CD4-positive, alpha-beta memory T cell (primary cell): ENCODE measurements at regions of chr16 and their contacts with region 1.

Region 1: GRCh38 chr16:2905431-2906387 is 6.0 kb upstream of the FLYWCH1 start:
- DNase-seq: peak; percentile 85 to 91 (median 88)
- H3K4me3 ChIP-seq: peak overlapping the region; percentile 72 to 84
- H3K4me3 Mint-ChIP-seq: peak overlapping the region; percentile 88 to 96 (median 92)
- H3K27ac ChIP-seq: peak overlapping the region; percentile 63
- H3K27ac Mint-ChIP-seq: peak overlapping the region; percentile 77 to 96 (median 92)
- H3K4me1 ChIP-seq: peaks cover 12% of the 10 kb centered on the region
- H3K4me1 Mint-ChIP-seq: peaks cover 11 to 35% (median 25%) of the 10 kb centered on the region in 4 donors
- H3K27me3 ChIP-seq: no peaks in the 10 kb centered on the region
- H3K27me3 Mint-ChIP-seq: no peaks in the 10 kb centered on the region

Region 2: GRCh38 chr16:2799866-2800239 is 105.9 kb before region 1 on chr16:
- CTCF ChIA-PET with region 1: no interaction called
- POLR2A ChIA-PET with region 1: no interaction called
- intact Hi-C with region 1: no loop called
- DNase-seq: peak in 1 of 5 donors; percentile 18
- H3K4me3 ChIP-seq: no peak overlapping the region
- H3K4me3 Mint-ChIP-seq: no peak overlapping the region
- H3K27ac ChIP-seq: no peak overlapping the region
- H3K27ac Mint-ChIP-seq: no peak overlapping the region
- H3K4me1 ChIP-seq: no peaks in the 10 kb centered on the region
- H3K4me1 Mint-ChIP-seq: no peaks in the 10 kb centered on the region
- H3K27me3 ChIP-seq: no peaks in the 10 kb centered on the region
- H3K27me3 Mint-ChIP-seq: peaks cover 4 to 8% of the 10 kb centered on the region in 2 donors

Region 3: GRCh38 chr16:2874912-2875362 is 30.8 kb before region 1 on chr16:
- CTCF ChIA-PET with region 1: interaction called, 10 read pairs
- POLR2A ChIA-PET with region 1: no interaction called
- intact Hi-C with region 1: no loop called
- DNase-seq: peak; percentile 53 to 64 (median 57)
- H3K4me3 ChIP-seq: no peak overlapping the region
- H3K4me3 Mint-ChIP-seq: no peak overlapping the region
- H3K27ac ChIP-seq: no peak overlapping the region
- H3K27ac Mint-ChIP-seq: peak overlapping the region in 3 of 7 donors; percentile 12 to 71 (median 68)
- H3K4me1 ChIP-seq: peaks cover 4% of the 10 kb centered on the region
- H3K4me1 Mint-ChIP-seq: peaks cover 0 to 4% (median 2%) of the 10 kb centered on the region in 4 donors
- H3K27me3 ChIP-seq: no peaks in the 10 kb centered on the region
- H3K27me3 Mint-ChIP-seq: peaks cover 0 to 2% of the 10 kb centered on the region in 2 donors

Region 4: GRCh38 chr16:2919511-2920255 is 14.0 kb after region 1 on chr16:
- CTCF ChIA-PET with region 1: interaction called, 30 read pairs
- POLR2A ChIA-PET with region 1: interaction called, 4 read pairs
- intact Hi-C with region 1: loop called (anchors 1 kb)
- DNase-seq: peak; percentile 47 to 68 (median 62)
- H3K4me3 ChIP-seq: no peak overlapping the region
- H3K4me3 Mint-ChIP-seq: no peak overlapping the region
- H3K27ac ChIP-seq: no peak overlapping the region
- H3K27ac Mint-ChIP-seq: peak overlapping the region; percentile 50 to 90 (median 78)
- H3K4me1 ChIP-seq: no peaks in the 10 kb centered on the region
- H3K4me1 Mint-ChIP-seq: peaks cover 5 to 12% (median 6%) of the 10 kb centered on the region in 4 donors
- H3K27me3 ChIP-seq: no peaks in the 10 kb centered on the region
- H3K27me3 Mint-ChIP-seq: no peaks in the 10 kb centered on the region

Region 5: DNA sequence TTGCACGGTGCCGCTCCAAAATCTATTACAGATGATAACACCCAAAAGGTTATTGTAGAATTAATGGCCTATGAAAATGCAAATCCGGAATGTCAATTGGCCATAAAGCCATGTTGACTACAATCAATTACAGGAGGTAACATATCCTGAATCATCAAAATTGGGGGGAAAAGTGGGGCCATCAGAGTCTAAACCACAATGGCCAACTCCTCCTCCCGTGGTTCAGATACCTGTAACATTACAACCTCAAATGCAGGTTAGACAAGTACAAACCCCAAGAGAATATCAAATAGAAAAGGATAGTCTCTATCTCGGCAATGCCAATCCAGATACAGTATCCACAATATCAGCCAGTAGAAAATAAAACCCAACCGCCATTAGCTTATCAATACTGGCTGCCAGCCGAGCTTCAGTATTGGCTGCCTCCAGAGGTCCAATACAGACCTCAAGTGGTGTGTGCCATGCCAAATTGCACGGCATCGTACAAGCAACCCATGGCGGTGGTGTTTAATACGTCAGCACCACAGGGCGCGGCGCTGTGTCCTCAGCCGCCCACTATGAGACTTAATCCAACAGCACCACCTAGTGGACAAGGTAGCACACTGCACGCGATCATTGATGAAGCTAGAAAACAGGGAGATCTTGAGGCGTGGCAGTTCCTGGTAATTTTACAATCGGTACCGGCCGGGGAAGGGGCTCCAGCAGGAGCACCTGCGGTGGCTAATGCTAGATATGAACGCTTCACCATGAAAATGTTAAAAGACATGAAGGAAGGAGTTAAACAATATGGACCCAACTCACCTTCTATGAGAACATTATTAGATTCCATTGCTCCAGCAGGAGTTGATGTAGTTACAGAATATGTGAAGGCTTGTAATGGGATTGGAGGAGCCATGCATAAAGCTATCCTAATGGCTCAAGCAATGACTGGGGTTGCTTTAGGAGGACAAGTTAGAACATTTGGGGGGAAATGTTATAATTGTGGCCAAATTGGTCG is 21.2 kb after region 1 on chr16:
- CTCF ChIA-PET with region 1: interaction called, 29 read pairs
- POLR2A ChIA-PET with region 1: interaction called, 14 read pairs
- intact Hi-C with region 1: loop called (anchors 2 kb)
- DNase-seq: peak; percentile 85 to 89 (median 87)
- H3K4me3 ChIP-seq: no peak overlapping the region
- H3K4me3 Mint-ChIP-seq: peak overlapping the region in 5 of 8 donors; percentile 13 to 56 (median 36)
- H3K27ac ChIP-seq: no peak overlapping the region
- H3K27ac Mint-ChIP-seq: peak overlapping the region; percentile 0 to 90 (median 53)
- H3K4me1 ChIP-seq: peaks cover 12% of the 10 kb centered on the region
- H3K4me1 Mint-ChIP-seq: peaks cover 7 to 21% (median 16%) of the 10 kb centered on the region in 4 donors
- H3K27me3 ChIP-seq: no peaks in the 10 kb centered on the region
- H3K27me3 Mint-ChIP-seq: no peaks in the 10 kb centered on the region

Region 6: GRCh38 chr16:3023669-3024478 is 118.2 kb after region 1 on chr16 and contains the starts of genes HCFC1R1 and THOC6:
- CTCF ChIA-PET with region 1: no interaction called
- POLR2A ChIA-PET with region 1: no interaction called
- intact Hi-C with region 1: loop called (anchors 10 kb)
- DNase-seq: peak; percentile 95 to 97 (median 95)
- H3K4me3 ChIP-seq: peak within 1 kb of the TSS; percentile 38 to 85
- H3K4me3 Mint-ChIP-seq: peak within 1 kb of the TSS; percentile 87 to 97 (median 93)
- H3K27ac ChIP-seq: peak within 1 kb of the TSS; percentile 90
- H3K27ac Mint-ChIP-seq: peak within 1 kb of the TSS; percentile 97 to 99 (median 99)
- H3K4me1 ChIP-seq: peaks cover 56% of the 10 kb centered on the region
- H3K4me1 Mint-ChIP-seq: peaks cover 22 to 67% (median 45%) of the 10 kb centered on the region in 4 donors
- H3K27me3 ChIP-seq: peaks cover 2% of the 10 kb centered on the region
- H3K27me3 Mint-ChIP-seq: no peaks in the 10 kb centered on the region
- total RNA-seq, gene HCFC1R1: 16.0 to 18.0 TPM
- total RNA-seq, gene THOC6: 18.4 to 22.5 TPM